Dendritic cell treated with granulocyte-macrophage colony-stimulating factor and Interleukin-4, amounts not matched to agents 40 ng/mL and 50 ng/mL, for 4 days (primary cell): ENCODE measurements at regions of chr12 and their contacts with region 1.

Region 1: DNA sequence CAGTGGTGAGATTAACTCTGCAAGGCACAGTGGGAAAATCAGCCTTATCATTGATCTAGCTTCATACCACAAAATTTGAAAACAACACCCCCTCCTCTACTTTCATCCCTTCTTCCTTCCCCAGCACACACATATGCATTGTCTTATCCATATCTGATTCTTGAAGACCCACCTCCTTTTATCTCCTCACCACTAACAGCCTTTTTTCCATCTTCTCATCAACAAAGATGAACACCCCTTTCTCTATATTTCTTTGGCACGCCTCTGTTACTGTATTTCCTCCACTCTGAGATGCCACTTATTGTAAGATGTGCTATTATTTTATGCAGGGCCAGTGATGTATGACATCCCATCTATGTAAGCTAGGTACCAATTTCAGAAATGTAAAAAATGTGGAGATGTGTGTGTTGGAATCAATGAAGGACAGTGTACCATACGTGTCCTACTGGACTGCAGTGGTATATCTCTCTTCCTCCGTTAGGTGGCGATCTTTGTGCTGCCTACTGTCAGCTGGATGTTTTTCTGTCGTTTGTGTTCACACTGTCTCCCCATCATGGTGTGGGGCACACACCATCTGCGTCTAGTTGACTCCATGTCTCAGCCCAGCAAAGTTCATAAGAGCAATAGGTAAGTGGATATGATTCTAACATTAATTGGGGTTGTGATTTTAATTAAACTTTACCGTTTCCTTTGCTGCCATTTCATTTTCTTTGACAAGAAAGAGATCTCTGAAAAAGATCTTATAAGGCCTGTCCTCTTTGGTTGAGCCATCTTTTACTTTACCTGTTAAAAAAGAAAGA is 24.0 kb downstream of the CCDC38 start:
- H3K4me3 Mint-ChIP-seq: no peak overlapping the region
- H3K27ac Mint-ChIP-seq: no peak overlapping the region
- H3K4me1 Mint-ChIP-seq: no peaks in the 10 kb centered on the region
- H3K27me3 Mint-ChIP-seq: peaks cover 1% of the 10 kb centered on the region

Region 2: GRCh38 chr12:95959107-95959506 is 40.7 kb after region 1 on chr12:
- intact Hi-C with region 1: loop called (anchors 2 kb)
- H3K4me3 Mint-ChIP-seq: no peak overlapping the region
- H3K27ac Mint-ChIP-seq: no peak overlapping the region
- H3K4me1 Mint-ChIP-seq: peaks cover 5% of the 10 kb centered on the region
- H3K27me3 Mint-ChIP-seq: no peaks in the 10 kb centered on the region

Region 3: DNA sequence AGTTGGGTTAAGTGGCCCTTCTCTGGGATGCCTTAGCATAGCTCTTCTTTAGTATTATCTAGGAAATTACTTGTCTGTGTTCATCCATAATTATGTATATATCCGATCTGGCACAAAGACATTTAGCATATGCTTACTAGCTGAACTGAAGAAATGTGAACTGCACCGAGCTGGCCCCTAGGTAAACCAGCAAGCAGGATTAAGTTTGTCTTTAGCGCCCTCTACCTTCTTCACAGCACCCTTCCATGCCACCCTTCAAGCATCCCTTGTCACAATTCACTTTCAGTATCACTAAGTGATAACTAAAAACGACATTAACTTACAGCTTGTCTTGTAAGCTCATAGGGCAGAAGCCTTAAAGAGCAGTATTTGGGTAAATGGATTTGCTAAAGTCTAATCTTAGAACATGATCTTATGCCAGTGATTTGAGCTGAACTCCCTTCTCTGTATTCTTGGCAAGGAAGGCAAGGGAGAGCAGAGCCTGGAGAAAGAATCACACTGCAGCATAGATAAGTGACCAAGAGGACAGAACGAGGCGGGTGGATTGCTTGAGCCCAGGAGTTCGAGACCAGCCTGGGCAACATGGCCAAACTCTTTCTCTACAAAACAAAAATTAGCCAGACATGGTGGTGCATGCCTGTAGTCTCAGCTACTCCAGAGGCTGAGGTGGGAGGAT is 80.4 kb after region 1 on chr12:
- intact Hi-C with region 1: loop called (anchors 1 kb)
- H3K4me3 Mint-ChIP-seq: no peak overlapping the region
- H3K27ac Mint-ChIP-seq: no peak overlapping the region
- H3K4me1 Mint-ChIP-seq: peaks cover 39% of the 10 kb centered on the region
- H3K27me3 Mint-ChIP-seq: no peaks in the 10 kb centered on the region